Left ventricle myocardium superior (tissue), 1 donor: ENCODE measurements at regions of chr2 and their contacts with region 1.

Region 1: GRCh38 chr2:68487773-68488355 is 20.5 kb downstream of the APLF start:
- DNase-seq: no peak
- ATAC-seq: no peak

Region 2: GRCh38 chr2:68403199-68403644 is 84.6 kb before region 1 on chr2:
- intact Hi-C with region 1: no loop called
- DNase-seq: no peak
- ATAC-seq: peak; percentile 83

Region 3: DNA sequence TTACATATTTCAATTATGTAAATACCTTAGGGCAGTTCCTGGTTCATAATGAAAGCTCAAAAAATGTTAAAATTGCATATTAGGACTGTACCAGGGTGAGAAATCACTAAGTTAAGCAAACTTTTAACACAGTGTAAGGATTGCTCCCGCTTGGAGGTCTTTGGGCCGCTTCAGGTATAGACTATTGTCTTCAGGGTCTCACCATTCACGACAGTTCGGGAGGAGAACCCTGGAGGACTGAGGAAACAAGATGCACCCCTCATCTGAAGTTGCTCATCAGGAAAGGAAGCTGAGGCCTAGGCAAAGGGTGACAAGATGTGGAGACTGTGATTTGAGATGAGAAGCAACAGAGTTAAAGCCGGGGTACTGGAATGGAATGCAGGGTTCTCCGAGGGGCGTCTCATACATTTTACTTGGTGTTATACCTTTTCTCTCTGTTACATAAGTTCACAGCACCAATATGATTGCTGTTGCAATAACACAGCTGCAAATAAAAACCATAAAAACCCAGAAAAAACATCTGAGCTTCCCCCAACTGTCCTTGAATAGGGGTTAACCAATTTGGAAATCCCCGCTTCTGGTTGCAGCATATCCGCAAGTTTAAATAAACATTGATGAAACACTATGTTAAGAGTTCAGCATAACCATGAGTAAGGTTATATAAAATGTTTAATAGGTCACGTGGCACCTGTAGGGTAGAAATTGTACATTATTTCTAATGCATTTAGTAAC is 60.9 kb before region 1 on chr2:
- intact Hi-C with region 1: no loop called
- DNase-seq: no peak
- ATAC-seq: no peak

Region 4: GRCh38 chr2:68889500-68890185 is 401.8 kb after region 1 on chr2:
- intact Hi-C with region 1: no loop called
- DNase-seq: no peak
- ATAC-seq: no peak

Region 5: DNA sequence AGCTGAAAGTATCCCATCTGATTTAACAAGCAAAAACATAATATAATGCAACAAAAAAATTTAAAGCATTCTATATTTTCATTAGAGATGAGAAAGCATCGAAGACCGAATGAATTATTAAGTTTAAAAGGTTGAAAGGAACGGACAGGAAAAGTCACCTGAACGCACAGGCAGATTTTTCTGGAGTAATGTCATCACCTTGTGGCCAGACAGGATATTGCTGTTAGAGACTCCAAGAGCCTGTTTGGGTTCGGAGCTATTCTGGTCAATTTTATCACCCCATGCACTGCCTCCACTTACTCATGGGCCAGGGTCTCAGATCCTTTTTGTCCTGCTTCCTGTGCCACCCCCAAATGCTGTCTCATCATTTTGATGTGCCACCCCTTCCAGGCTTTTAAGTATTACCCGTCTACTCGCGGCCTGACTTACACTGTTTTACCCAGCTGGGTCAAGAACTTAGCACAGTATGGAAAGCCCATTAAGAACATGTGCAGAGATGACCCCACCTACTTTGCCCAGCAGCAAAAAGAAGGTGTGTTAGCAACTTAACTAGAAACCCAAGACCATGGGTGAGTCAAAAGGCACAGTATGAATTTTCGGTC is 437.5 kb after region 1 on chr2:
- intact Hi-C with region 1: loop called (anchors 10 kb)
- DNase-seq: no peak
- ATAC-seq: peak; percentile 57